Activated CD4-positive, alpha-beta T cell treated with anti-CD3 and anti-CD28 coated beads, Interleukin-2, amount 10 ng/mL, durations not matched to agents 24 days and 14 days (primary cell): ENCODE measurements at regions of chrX and their contacts with region 1.

Region 1: DNA sequence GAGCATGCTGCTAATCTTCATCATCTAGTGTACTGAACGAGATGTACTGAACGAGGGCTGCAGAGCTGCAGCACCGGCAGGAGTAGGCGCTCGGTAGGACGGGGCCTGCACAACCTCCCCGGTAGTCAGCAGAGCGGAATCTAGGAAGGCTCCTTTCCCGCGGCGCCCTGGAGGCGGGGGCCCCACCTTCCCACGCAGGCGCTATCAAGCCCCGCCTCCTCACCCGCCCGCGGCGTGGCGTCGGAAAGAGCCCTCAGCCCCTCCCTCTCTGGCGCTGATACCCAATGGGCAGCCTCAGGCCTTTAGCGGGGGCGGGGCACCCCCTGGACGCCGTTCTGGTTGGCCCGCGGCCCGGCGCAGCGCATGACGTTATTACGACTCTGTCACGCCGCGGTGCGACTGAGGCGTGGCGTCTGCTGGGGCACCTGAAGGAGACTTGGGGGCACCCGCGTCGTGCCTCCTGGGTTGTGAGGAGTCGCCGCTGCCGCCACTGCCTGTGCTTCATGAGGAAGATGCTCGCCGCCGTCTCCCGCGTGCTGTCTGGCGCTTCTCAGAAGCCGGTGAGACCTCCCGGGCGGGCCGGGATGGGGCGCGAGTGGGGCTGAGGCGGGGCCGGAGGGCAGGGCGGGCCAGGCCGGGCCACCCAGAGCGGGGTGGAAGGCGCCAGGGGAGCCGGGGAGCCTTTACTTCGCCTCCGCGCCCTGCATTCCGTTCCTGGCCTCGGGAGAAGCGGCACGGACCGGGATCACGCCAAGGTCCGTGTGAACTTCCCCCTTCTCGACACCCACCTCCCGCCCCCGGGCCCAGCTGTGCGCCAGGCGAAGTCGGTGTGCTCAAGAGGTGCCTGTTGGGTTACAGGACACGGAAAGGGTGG is at the start of gene PDHA1:
- DNase-seq: peak; percentile 97
- H3K4me3 Mint-ChIP-seq: peak within 1 kb of the TSS; percentile 87
- H3K27ac Mint-ChIP-seq: peak within 1 kb of the TSS; percentile 77
- H3K4me1 Mint-ChIP-seq: peaks cover 8% of the 10 kb centered on the region
- H3K27me3 Mint-ChIP-seq: no peaks in the 10 kb centered on the region
- total RNA-seq, gene PDHA1: 207 and 222 TPM in 2 replicates

Region 2: DNA sequence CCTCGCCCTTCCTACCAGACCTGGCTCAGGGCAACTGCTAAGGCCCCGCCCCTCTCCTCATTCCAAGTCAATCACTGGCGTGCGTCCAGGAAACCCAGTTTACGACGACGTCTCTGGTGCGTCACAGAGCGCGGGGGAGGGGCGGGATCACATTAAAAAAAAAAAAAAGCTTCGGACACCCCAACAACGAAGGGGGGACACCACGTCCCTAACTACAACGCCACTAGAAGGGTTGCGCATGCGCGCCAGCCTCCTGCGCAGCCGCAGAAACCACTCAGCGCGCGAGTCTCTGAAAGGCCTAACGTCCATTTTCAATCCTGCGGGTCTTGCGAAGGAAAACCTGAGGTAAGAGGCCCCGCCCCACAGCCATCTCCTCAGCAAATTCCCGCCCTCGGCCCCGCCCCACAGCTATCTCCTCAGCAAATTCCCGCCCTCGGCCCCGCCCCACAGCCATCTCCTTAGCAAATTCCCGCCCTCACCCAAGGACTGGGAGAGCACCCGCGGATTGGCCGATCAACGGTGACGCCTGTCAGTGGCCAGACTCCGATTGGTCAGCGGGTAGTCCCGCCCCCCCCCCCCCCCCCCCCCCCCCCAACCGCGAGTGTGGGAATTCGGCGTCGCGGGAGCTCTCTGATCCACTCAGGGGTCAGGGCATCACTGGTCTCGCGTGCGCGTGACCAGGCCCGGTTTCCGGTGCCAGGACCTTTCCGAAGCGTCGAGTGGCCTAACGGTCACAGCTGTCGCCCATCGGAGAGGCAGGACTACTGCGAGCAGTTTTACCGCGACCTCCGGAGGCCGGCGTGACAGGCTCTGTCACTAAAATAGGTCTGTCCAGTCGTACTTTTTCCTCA is 1606.7 kb before region 1 on chrX and contains the start of gene SCML1:
- intact Hi-C with region 1: loop called (anchors 5 kb)
- DNase-seq: peak; percentile 94
- H3K4me3 Mint-ChIP-seq: peak within 1 kb of the TSS; percentile 85
- H3K27ac Mint-ChIP-seq: peak within 1 kb of the TSS; percentile 76
- H3K4me1 Mint-ChIP-seq: peaks cover 16% of the 10 kb centered on the region
- H3K27me3 Mint-ChIP-seq: peaks cover 28% of the 10 kb centered on the region
- total RNA-seq, gene SCML1: 1.4 and 1.7 TPM in 2 replicates

Region 3: GRCh38 chrX:18984381-18985185 is 359.2 kb before region 1 on chrX:
- intact Hi-C with region 1: loop called (anchors 1 kb)
- DNase-seq: peak; percentile 94
- H3K4me3 Mint-ChIP-seq: peak overlapping the region; percentile 82
- H3K27ac Mint-ChIP-seq: peak overlapping the region; percentile 90
- H3K4me1 Mint-ChIP-seq: peaks cover 11% of the 10 kb centered on the region
- H3K27me3 Mint-ChIP-seq: no peaks in the 10 kb centered on the region

Region 4: DNA sequence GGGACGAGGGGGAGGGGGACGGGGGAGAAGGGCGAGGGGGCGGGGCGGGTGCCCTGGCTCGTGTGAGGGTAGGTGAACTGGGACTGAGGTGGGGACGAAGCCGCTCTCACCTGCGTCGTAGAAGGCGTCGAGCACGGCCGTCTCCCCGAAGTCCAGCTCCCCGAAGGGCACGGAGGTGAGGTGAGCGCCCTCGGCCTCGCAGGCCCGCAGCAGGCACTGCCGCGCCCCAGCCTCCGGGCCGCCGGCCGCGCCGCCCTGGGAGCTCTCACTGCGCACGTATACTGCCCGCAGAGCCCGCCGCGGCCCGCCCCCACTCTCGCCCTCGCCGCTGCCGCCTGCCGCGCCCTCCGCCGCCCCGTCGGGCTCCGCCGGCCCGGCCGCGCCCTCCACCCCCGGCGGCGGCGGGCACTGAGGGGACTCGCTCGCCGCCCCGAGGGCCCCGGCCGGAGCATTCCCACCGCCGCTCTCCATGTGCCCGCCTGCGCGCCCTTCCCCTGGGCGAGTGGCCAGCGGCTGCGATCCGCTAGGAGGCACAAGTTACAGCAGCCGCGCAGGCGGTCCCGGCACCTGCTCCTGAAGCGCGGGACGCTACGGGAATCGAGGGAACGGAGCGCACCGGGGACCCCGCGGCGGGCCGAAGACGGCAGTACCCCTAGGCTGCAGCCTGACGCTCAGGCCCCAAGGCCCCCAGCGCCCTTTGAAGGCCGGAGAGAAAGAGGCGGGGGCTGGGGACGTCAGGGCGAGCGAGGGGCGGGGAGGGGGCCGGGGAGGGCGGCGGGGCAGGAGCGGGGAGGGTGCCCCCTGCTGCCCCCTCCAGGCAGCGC is 171.2 kb after region 1 on chrX and contains the start of gene MAP3K15:
- intact Hi-C with region 1: no loop called
- DNase-seq: peak; percentile 64
- H3K4me3 Mint-ChIP-seq: peak within 1 kb of the TSS; percentile 71
- H3K27ac Mint-ChIP-seq: no peak within 1 kb of the TSS
- H3K4me1 Mint-ChIP-seq: peaks cover 2% of the 10 kb centered on the region
- H3K27me3 Mint-ChIP-seq: peaks cover 30% of the 10 kb centered on the region
- total RNA-seq, gene MAP3K15: 0.31 and 0.37 TPM in 2 replicates

Region 5: DNA sequence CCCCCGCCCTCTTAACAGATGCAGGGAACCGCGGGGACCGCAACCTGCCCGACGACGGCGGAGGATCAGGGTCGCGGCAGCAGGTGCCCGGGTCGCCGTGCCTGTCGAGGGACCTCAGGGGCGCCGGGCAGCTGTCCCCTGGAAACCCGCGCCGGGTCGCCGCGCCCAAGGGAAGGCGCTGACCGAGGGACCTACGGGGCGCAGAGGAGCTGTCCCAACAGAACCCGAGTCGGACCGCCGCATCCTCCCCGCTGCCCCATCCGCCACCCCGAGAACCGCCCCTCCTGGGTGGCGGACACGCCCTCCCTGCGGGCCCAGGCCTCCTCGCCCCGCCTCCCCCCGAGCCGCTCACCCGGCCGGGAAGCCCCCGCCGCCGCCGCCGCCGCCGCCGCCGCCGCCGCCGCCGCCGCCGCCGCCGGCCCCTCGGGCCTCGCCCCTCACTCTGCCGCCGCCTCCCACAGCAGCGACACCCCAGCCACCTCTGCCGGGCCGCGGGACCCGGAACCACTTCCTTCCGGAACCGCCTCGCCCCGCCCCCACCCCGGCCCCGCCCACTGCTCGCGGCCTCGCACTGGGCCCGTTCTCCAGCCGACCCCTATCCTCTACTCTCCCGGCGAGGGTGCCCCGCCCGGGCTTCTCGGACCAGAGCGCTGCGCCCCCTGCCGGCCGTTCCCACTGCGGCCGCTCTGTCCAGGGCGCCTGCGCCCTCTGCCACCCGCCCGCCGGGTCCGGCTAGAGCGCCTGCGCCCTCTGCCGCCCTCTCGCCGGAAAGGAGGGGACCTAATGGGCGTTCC is 647.0 kb after region 1 on chrX and contains the start of gene BCLAF3:
- intact Hi-C with region 1: loop called (anchors 10 kb)
- DNase-seq: peak; percentile 95
- H3K4me3 Mint-ChIP-seq: peak within 1 kb of the TSS; percentile 82
- H3K27ac Mint-ChIP-seq: peak within 1 kb of the TSS; percentile 73
- H3K4me1 Mint-ChIP-seq: peaks cover 8% of the 10 kb centered on the region
- H3K27me3 Mint-ChIP-seq: no peaks in the 10 kb centered on the region
- total RNA-seq, gene BCLAF3: 4.4 and 5.6 TPM in 2 replicates